Endothelial cell of umbilical vein (primary cell): ENCODE measurements at regions of chr2 and their contacts with region 1.

Region 1: DNA sequence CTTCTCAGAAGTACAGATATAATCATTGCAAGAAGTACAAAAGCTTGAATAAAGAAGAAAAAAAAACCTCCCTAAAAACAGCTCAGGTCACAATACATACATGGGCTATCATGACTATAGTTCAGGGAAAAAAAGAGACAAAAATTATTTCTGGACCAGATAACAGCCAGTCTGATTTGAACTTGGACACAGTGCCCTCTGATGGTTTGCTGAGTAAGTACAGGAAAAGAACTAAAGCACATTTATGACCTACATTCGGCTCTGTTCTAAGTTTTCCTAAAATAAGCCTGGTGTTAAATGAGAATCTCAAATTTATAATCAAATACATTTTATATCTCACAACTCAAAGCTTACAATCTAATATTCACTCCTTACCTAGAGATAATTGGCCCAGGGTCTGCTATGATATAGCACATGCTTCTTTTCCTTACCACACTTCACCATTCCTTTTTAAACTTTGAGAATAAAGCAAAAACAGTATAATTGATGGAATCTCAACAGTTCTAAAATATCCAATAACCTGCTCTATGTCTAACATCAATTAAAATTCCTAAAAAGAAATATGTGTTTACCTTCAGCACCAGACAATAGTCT is 81.1 kb downstream of the RAPH1 start:
- DNase-seq: peak; percentile 67
- H3K4me3 ChIP-seq: no peak overlapping the region
- H3K27ac ChIP-seq: no peak overlapping the region
- H3K4me1 ChIP-seq: no peaks in the 10 kb centered on the region
- H3K27me3 ChIP-seq: no peaks in the 10 kb centered on the region
- CTCF ChIP-seq: peak; percentile 49 to 58
- POLR2A ChIP-seq: no peak

Region 2: DNA sequence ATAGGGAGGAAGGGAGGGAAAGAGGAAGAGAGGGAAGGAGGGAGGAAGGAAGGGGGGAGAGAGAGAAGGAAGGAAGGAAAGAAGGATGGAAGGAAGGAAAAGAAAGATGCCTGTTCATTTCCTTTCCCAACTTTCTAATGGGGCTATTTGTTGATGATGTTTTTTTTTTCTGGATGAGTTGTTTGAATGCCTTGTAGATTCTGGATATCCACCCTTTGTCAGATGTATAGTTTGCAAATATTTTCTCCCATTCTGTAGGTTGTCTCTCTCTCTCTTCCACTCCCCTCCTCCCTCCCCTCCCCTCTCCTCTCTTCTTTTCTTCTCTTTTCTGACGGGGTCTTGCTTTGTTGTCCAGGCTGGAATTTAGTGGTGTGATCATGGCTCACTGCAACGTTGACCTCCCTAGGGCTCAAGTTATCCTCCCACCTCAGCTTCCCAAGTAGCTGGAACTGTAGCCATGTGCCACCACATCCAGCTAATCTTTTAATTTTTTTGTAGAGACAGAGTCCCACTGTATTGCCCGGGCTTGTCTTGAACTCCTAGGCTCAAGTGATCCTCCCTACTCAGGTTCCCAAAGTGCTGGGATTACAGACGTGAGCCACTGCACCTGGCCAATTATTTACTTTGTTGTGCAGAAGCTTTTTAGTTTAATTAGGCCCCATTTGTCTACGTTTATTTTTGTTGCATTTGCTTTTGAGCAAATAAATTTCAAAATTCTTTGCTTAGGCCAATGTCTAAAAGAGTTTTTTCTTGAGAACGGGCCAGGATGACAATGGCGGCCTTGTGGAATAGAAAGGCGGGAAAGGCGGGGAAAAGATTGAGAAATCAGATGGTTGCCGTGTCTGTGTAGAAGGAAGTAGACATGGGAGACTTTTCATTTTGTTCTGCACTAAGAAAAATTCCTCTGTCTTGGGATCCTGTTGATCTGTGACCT is 876.4 kb before region 1 on chr2:
- CTCF ChIA-PET with region 1: no interaction called
- POLR2A ChIA-PET with region 1: no interaction called
- dilution Hi-C with region 1: no loop called
- intact Hi-C with region 1: loop called (anchors 2 kb)
- DNase-seq: no peak
- H3K4me3 ChIP-seq: no peak overlapping the region
- H3K27ac ChIP-seq: no peak overlapping the region
- H3K4me1 ChIP-seq: no peaks in the 10 kb centered on the region
- H3K27me3 ChIP-seq: no peaks in the 10 kb centered on the region
- CTCF ChIP-seq: no peak
- POLR2A ChIP-seq: no peak

Region 3: GRCh38 chr2:202831242-202832220 is 622.4 kb before region 1 on chr2:
- CTCF ChIA-PET with region 1: no interaction called
- POLR2A ChIA-PET with region 1: no interaction called
- dilution Hi-C with region 1: no loop called
- intact Hi-C with region 1: loop called (anchors 2 kb)
- DNase-seq: peak; percentile 75
- H3K4me3 ChIP-seq: no peak overlapping the region
- H3K27ac ChIP-seq: no peak overlapping the region
- H3K4me1 ChIP-seq: peaks cover 15% of the 10 kb centered on the region
- H3K27me3 ChIP-seq: no peaks in the 10 kb centered on the region
- CTCF ChIP-seq: peak; percentile 56 to 61
- POLR2A ChIP-seq: no peak

Region 4: DNA sequence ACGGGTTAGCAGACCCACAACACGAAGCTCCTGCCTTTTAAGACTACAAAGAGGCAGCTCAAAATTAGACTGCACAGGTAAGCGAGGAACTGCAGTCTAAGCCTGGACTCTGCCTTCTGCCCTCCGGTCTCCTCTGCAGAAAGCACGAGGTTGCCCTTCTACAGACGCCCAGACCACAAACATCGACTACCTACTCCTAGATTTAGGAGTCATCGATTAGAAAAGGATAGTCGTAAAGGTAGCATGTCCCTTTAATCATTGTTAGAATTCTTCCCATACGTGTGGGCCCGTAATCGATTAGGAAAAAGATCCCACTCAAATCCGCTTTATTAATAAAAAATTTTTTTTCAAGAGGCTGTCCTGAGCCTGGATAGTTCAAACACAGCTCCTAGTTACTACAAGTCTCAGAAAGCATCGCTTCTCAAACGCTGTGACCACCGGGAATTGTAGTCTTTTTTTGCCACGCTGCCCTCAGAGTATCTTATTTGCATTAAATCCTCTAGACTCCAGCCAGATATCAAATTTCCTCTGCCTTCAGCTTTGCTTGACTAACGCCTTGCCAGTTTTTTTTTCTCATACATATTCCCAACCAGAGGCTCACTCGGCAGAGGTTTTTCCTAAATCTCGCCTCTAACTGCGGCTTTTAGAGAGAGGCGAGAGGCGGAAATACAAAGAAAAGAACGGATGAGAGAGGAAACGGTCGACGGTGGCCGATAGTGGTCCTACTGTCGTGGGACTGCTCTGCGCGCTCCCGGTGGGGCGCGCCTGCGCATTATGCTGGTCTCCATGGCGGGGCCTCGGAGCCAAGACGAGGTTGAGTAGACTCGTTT is 542.2 kb before region 1 on chr2 and contains the starts of genes CARF and WDR12:
- CTCF ChIA-PET with region 1: no interaction called
- POLR2A ChIA-PET with region 1: no interaction called
- dilution Hi-C with region 1: no loop called
- intact Hi-C with region 1: loop called (anchors 10 kb)
- DNase-seq: peak; percentile 96
- H3K4me3 ChIP-seq: peak within 1 kb of the TSS; percentile 84 to 97 (median 97)
- H3K27ac ChIP-seq: peak within 1 kb of the TSS; percentile 86
- H3K4me1 ChIP-seq: peaks cover 7% of the 10 kb centered on the region
- H3K27me3 ChIP-seq: no peaks in the 10 kb centered on the region
- CTCF ChIP-seq: no peak
- POLR2A ChIP-seq: peak; percentile 78
- total RNA-seq, gene CARF: 3.2 and 3.7 TPM in 2 replicates
- total RNA-seq, gene WDR12: 65.6 and 67.1 TPM in 2 replicates

Region 5: GRCh38 chr2:203014456-203015199 is 439.3 kb before region 1 on chr2 and contains the start of gene NBEAL1:
- CTCF ChIA-PET with region 1: no interaction called
- POLR2A ChIA-PET with region 1: no interaction called
- dilution Hi-C with region 1: no loop called
- intact Hi-C with region 1: loop called (anchors 10 kb)
- DNase-seq: peak; percentile 100
- H3K4me3 ChIP-seq: peak within 1 kb of the TSS; percentile 56 to 96 (median 92)
- H3K27ac ChIP-seq: peak within 1 kb of the TSS; percentile 93
- H3K4me1 ChIP-seq: peaks cover 22% of the 10 kb centered on the region
- H3K27me3 ChIP-seq: peaks cover 8 to 13% of the 10 kb centered on the region in 2 experiments
- CTCF ChIP-seq: no peak
- POLR2A ChIP-seq: peak; percentile 66
- total RNA-seq, gene NBEAL1: 23.3 and 23.4 TPM in 2 replicates

Region 6: DNA sequence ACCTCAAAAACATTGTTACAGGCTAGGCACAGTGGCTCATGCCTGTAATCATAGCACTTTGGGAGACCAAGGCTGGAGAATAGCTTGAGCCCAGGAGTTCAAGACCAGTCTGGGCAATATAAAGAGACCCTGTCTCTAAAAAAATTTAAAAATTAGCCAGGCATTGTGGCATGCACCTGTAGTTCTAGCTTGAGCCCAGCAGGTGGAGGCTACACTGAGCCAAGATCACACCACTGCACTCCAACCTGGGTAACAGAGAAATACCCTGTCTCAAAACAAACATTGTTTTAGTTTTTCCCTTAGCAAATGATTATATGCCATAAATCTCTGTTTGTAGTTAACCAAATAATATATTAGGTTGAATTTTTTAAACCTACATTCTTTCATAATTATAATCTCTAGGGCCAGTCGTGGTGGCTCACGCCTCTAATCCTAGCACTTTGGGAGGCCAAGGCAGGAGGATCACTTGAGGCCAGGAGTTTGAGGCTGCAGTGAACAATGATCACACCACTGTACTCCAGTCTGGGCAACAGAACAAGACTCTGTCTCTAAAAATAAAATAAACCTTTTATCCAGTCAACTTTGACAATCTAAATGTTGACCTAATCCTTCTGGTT is 228.4 kb before region 1 on chr2:
- CTCF ChIA-PET with region 1: interaction called, 28 read pairs
- POLR2A ChIA-PET with region 1: no interaction called
- dilution Hi-C with region 1: no loop called
- intact Hi-C with region 1: loop called (anchors 1 kb)
- DNase-seq: peak; percentile 32
- H3K4me3 ChIP-seq: no peak overlapping the region
- H3K27ac ChIP-seq: no peak overlapping the region
- H3K4me1 ChIP-seq: no peaks in the 10 kb centered on the region
- H3K27me3 ChIP-seq: no peaks in the 10 kb centered on the region
- CTCF ChIP-seq: peak; percentile 51 to 66
- POLR2A ChIP-seq: no peak

Region 7: DNA sequence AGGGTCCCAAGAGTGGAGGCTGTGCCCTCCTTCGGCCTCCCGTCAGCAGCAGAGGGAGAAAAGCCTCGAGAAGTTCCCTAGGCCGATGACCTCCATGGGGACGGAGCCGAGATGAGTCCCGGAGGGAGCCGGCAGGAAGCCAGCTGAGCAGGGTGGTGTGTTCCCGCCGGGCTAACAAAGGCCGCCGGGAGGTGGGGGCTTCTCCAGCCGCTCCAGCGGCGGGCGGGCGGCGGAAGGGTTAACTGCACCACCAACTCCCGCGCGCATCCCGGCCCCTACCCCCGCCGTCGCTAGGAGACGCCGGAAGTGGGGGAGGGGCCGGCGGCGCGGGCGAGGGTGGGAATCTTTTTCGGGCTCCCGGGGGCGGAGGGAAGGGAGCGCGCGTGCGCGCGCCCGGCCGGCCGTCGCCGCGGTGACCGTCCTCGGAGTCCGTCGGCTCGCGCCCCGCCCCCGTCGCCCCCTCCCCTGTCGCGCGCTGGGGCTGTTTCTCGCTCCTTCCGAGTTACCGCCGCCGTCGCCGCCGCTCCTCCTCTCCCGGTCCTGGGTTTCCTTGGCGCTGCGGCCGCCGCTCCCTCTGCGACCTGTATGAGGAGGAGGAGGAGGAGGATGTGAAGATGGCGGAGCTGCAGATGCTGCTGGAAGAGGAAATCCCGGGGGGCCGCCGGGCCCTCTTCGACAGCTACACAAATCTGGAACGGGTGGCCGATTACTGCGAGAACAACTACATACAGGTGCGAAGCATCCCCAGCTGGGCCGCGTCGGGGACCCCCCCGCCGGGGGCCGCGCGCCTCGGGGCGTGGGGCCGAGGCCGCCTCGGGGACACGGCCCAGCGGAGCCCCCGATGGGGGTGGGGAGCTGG is 125.8 kb before region 1 on chr2 and contains the start of gene ABI2:
- CTCF ChIA-PET with region 1: interaction called, 3 read pairs
- POLR2A ChIA-PET with region 1: no interaction called
- dilution Hi-C with region 1: no loop called
- intact Hi-C with region 1: loop called (anchors 5 kb)
- DNase-seq: peak; percentile 81
- H3K4me3 ChIP-seq: peak within 1 kb of the TSS; percentile 97 to 100 (median 99)
- H3K27ac ChIP-seq: peak within 1 kb of the TSS; percentile 79
- H3K4me1 ChIP-seq: peaks cover 19% of the 10 kb centered on the region
- H3K27me3 ChIP-seq: no peaks in the 10 kb centered on the region
- CTCF ChIP-seq: no peak
- POLR2A ChIP-seq: peak; percentile 81
- total RNA-seq, gene ABI2: 61.0 and 74.4 TPM in 2 replicates

Region 8: GRCh38 chr2:203338322-203338721 is 115.6 kb before region 1 on chr2:
- CTCF ChIA-PET with region 1: no interaction called
- POLR2A ChIA-PET with region 1: no interaction called
- dilution Hi-C with region 1: no loop called
- intact Hi-C with region 1: no loop called
- DNase-seq: no peak
- H3K4me3 ChIP-seq: no peak overlapping the region
- H3K27ac ChIP-seq: no peak overlapping the region
- H3K4me1 ChIP-seq: peaks cover 25% of the 10 kb centered on the region
- H3K27me3 ChIP-seq: no peaks in the 10 kb centered on the region
- CTCF ChIP-seq: no peak
- POLR2A ChIP-seq: no peak